HEK293T (cell line): ENCODE measurements at regions of chr18 and their contacts with region 1.

Region 1: DNA sequence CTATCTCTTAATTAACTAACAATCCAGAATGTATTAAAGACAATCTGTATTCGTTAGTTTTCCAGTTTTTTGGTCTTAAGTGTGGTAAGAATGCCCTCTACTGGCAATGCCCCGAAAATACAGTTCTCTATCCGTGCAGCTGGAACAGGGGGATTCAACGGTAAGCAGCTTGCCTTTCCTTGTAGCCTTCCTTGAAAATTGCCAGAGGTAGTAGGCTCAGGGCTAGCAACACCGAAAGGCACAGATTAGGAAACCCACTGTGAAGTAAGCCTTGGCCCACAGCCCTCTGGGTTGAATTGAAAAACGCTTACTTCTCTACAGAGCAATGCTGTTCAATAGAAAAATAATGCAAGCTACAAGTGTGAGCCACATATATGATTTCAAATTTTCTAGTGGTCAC is 17.1 kb upstream of the VPS4B start:
- DNase-seq: peak; percentile 52

Region 2: DNA sequence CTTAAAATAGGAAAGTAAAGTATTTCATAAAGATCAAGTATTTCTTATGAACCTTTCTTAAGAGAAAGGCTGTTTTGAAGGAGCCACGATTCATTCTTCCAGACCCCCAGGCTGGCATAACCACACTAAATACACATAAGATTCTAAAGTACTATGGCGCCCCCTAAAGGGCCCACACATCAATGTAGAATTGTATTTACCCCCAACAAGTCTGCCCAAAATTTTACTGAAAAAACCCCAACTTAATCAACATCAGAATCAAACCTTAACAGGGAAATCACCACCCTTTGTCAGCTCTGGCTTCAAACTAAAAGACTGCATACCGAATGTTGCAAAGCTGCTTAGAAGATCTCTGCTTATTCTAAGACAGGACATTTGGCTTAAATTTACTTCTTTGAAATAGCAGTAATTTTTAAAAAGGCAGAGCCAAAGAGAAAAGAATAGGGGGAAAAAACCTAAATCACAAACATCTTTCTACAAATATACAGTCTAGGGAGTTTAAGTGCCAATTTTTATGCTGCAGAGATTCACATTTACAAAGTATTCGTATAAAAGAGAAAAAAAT is 99.3 kb before region 1 on chr18:
- CTCF ChIA-PET with region 1: interaction called, 22 read pairs
- POLR2A ChIA-PET with region 1: no interaction called
- DNase-seq: no peak

Region 3: GRCh38 chr18:63422087-63422809 is 17.1 kb before region 1 on chr18 and contains the start of gene VPS4B:
- CTCF ChIA-PET with region 1: no interaction called
- POLR2A ChIA-PET with region 1: interaction called, 10 read pairs
- DNase-seq: peak; percentile 92